Psoas muscle (tissue), 8 donors: ENCODE measurements at regions of chr18 and their contacts with region 1.

Region 1: GRCh38 chr18:62425465-62426195 is 97.2 kb upstream of the ZCCHC2 start:
- DNase-seq: peak; percentile 65 to 82
- ATAC-seq: peak; percentile 79 to 88 (median 86)
- H3K4me3 ChIP-seq: peak overlapping the region; percentile 56
- H3K27ac ChIP-seq: peak overlapping the region; percentile 98
- H3K4me1 ChIP-seq: peaks cover 23% of the 10 kb centered on the region
- H3K27me3 ChIP-seq: no peaks in the 10 kb centered on the region
- CTCF ChIP-seq: peak; percentile 89

Region 2: GRCh38 chr18:62186774-62187542 is 238.7 kb before region 1 on chr18 and contains the starts of genes PIGN and RELCH:
- intact Hi-C with region 1: loop called in 1 of 2 experiments (anchors 2 kb)
- DNase-seq: peak; percentile 91 to 95
- ATAC-seq: peak; percentile 95 to 99 (median 99)
- H3K4me3 ChIP-seq: peak within 1 kb of the TSS; percentile 100
- H3K27ac ChIP-seq: peak within 1 kb of the TSS; percentile 84
- H3K4me1 ChIP-seq: peaks cover 36% of the 10 kb centered on the region
- H3K27me3 ChIP-seq: no peaks in the 10 kb centered on the region
- CTCF ChIP-seq: no peak
- total RNA-seq, gene PIGN: 9.5 to 18.0 (median 13.0) TPM
- total RNA-seq, gene RELCH: 7.8 to 13.4 (median 10.9) TPM

Region 3: DNA sequence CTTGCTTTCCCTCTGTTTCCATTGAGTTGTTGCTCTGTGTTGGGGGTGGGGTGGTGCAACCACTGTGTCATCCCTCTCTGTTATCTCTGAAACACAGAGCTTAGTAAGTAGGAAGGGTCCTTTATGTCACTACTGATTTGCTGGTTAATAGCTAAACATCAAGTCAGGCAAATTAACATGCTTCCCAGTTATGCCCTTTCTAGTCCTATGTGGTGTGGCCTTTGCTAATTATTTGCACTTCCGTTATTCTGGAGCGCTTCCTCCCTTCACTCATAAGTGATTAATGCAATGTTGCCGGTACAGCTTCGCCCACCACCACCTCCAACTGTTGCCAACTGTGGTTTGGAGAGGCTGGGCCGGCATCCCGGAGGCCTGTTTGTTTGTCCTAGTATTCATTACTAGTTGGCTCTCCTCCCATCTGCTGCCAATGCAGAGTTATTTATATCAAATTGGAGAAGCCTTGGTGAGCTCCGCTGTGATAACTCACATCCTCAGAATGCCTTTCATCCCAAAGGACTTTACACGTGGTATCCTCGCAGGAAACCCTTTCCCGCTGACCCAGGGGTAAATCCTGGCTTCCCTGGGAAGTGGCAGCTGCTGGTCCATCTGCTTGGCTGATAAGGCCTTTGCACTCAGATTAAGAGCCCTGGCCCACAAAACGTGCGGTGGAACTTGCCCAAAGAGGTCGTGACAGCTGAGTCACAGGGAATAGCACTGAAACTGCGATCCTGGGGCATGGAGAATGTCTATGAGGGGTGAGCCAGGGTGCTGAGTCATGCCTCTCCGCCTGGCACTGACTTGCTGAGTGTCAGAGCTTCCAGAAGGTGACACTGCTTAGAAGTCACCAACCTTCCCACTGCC is 25.1 kb after region 1 on chr18:
- intact Hi-C with region 1: loop called in 1 of 2 experiments (anchors 1 kb)
- DNase-seq: peak; percentile 85 to 92
- ATAC-seq: peak; percentile 93 to 96 (median 94)
- H3K4me3 ChIP-seq: no peak overlapping the region
- H3K27ac ChIP-seq: peak overlapping the region; percentile 87
- H3K4me1 ChIP-seq: peaks cover 26% of the 10 kb centered on the region
- H3K27me3 ChIP-seq: no peaks in the 10 kb centered on the region
- CTCF ChIP-seq: no peak

Region 4: GRCh38 chr18:62522504-62523254 is 97.0 kb after region 1 on chr18 and contains the start of gene ZCCHC2:
- intact Hi-C with region 1: loop called (anchors 1 to 5 kb)
- DNase-seq: peak; percentile 98 to 99
- ATAC-seq: peak; percentile 78 to 87 (median 80)
- H3K4me3 ChIP-seq: peak within 1 kb of the TSS; percentile 95
- H3K27ac ChIP-seq: peak within 1 kb of the TSS; percentile 99
- H3K4me1 ChIP-seq: peaks cover 24% of the 10 kb centered on the region
- H3K27me3 ChIP-seq: no peaks in the 10 kb centered on the region
- CTCF ChIP-seq: no peak
- total RNA-seq, gene ZCCHC2: 19.4 to 38.2 (median 32.1) TPM

Region 5: GRCh38 chr18:62566199-62566598 is 140.6 kb after region 1 on chr18:
- intact Hi-C with region 1: loop called in 1 of 2 experiments (anchors 5 kb)
- DNase-seq: peak in 1 of 2 donors; percentile 69
- ATAC-seq: peak in 3 of 4 donors; percentile 68 to 86 (median 80)
- H3K4me3 ChIP-seq: no peak overlapping the region
- H3K27ac ChIP-seq: no peak overlapping the region
- H3K4me1 ChIP-seq: no peaks in the 10 kb centered on the region
- H3K27me3 ChIP-seq: no peaks in the 10 kb centered on the region
- CTCF ChIP-seq: peak; percentile 45

Region 6: DNA sequence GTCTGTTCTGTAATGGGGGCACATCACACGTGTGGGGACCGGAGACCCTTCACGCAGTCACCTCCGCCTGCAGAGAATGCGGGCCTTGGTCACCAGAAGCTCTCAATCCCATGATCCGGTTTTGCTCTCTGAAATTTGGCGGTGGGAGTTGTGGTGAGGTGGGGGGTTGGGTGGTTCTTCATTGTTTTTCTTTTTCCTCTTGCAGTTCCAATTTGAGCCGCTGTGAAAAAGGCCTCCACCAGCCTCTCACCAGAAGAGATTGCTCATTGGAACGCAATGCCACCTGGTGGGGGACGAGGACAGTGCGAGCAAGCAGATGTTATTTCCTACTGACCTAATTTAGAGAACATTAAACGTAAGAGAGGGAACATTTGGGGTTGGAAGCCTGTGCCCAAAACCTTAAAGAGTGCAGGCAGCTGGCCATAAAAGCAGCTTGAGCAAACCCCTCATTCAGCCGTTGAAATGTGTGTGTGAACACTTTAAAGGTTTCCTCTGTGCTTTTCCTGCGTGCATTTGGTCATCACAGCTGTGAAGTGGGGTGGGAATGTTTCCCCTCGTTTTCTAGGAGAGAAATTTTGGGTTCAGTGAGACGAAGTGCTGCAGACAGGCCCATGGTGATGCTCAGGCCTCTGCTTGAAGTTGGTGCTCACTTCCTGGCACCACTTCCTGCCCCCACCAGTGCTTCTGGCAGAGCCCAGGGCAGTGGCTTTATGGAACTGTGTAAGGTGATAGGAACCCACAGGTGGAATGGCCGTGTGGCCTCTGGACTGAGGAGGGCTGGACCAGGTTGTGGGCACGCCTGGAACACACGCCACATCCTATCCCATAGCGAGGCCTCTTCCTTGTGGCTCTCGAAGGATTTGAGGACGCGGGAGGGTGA is 158.9 kb after region 1 on chr18:
- intact Hi-C with region 1: loop called (anchors 2 to 5 kb)
- DNase-seq: peak; percentile 84 to 91
- ATAC-seq: peak; percentile 90 to 93 (median 90)
- H3K4me3 ChIP-seq: peak overlapping the region; percentile 28
- H3K27ac ChIP-seq: peak overlapping the region; percentile 13
- H3K4me1 ChIP-seq: peaks cover 16% of the 10 kb centered on the region
- H3K27me3 ChIP-seq: no peaks in the 10 kb centered on the region
- CTCF ChIP-seq: peak; percentile 91